Head of caudate nucleus (tissue), 42 donors: ENCODE measurements at regions of chr2 and their contacts with region 1.

Region 1: DNA sequence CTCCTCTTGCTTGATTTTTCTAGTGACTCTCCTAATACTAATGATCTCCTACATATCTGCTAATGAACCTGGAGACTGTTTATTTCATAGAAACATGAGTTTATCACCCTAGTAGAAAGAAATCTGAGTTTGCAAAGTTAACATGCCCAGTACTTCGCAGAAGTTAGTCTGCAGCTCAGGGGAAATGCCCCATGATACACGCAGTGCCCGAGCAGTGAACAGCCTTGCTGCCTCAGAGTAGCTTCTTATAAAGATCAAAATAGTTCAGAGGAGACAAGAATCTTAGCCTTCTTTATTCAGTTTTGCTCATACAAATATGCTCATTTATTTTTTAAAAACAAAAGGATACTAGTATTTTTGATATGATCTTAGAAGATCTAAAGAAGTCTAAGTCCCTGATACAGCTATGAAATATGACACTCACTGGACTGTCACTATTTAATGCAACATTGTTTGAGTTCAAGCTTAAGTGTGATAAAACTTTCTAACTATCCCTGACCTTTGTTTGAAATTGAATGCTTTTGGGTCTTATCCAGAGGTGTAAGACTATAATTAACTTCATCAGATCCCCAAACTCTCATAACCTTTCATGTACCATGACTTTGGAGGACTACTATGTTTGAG is 20.5 kb downstream of the FRZB start:
- DNase-seq: no peak

Region 2: DNA sequence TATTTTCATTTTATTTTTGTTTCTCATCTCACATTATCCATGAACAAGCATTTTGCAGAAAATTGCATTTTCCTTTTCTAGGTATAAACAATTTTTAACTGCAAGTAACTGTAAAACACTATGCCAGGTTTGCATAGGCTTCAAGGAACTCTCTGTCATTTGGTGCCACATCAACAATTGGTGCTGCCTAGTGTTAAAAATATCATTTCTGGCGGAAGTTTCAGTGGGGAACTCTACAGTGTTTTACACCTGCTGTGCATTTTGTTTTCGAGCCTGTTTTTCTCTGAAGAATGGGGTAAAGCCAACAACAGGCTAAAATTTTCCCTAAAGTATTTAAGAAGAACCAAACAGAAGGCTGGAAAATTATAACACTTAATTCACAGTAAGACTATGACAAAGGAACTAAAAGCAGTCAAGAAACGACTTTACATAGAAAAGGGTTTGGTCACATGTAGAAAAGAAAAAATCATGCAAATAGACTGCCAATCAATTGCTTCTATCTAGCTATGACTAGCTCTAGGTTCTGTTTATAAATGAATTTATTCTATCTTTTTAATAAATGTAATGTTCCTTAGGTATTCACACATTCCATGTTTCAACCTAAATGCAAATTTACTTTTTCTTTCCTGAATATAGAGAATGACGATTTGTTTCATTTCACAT is 42.0 kb after region 1 on chr2:
- intact Hi-C with region 1: loop called (anchors 2 kb)
- DNase-seq: no peak